Activated B cell treated with CpG ODN at 0.5 μM for 24 hours (primary cell): ENCODE measurements at regions of chr6 and their contacts with region 1.

Region 1: GRCh38 chr6:108113557-108114519 is 39.3 kb upstream of the OSTM1 start:
- DNase-seq: peak; percentile 25
- ATAC-seq: no peak
- H3K4me3 Mint-ChIP-seq: peak overlapping the region; percentile 79
- H3K27ac Mint-ChIP-seq: no peak overlapping the region
- H3K4me1 Mint-ChIP-seq: peaks cover 47% of the 10 kb centered on the region
- H3K27me3 Mint-ChIP-seq: peaks cover 67% of the 10 kb centered on the region
- CTCF ChIP-seq: no peak

Region 2: GRCh38 chr6:108133594-108134179 is 19.8 kb after region 1 on chr6:
- CTCF ChIA-PET with region 1: no interaction called
- POLR2A ChIA-PET with region 1: no interaction called
- intact Hi-C with region 1: loop called (anchors 1 kb)
- DNase-seq: peak; percentile 42
- ATAC-seq: peak; percentile 71
- H3K4me3 Mint-ChIP-seq: peak overlapping the region; percentile 87
- H3K27ac Mint-ChIP-seq: peak overlapping the region; percentile 41
- H3K4me1 Mint-ChIP-seq: peaks cover 16% of the 10 kb centered on the region
- H3K27me3 Mint-ChIP-seq: peaks cover 61% of the 10 kb centered on the region
- CTCF ChIP-seq: no peak

Region 3: DNA sequence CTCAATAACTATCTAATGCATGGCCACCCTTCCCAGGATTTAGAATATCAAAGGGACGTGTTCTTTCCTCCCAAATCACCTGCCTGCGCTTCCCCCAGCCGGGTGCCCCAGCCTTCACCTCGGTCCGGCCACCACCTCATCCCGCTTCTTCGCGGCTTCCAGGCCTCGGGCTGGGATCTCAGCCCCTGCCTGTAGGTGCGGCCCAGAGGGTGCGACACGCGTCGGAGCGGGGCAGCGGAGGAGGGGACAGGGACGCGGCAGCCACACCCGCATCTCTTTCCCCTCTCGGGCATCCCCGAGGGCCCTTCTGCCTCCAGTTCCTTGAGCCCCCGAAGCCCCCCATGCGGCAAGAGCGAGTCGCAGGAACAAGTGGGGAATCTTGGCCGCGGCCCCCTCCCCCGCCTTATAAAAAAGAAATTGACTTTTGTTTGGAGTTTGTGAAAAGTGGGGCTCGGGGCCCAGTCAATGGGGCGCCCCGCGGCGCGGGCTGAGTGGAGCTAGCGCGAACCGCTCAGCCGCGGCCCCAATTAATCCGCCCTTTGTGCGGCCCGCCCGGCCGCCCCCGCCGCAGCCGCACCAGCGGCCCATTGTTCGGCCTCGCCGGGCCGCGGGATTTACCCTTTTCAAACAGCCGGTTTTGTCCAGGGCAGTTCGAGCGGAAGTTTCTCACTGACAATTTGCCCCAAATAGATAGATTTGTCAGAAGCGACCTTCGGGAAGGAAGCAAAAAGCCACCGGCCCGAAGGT is 43.6 kb after region 1 on chr6:
- CTCF ChIA-PET with region 1: interaction called, 7 read pairs
- POLR2A ChIA-PET with region 1: interaction called, 3 read pairs
- intact Hi-C with region 1: loop called (anchors 2 kb)
- DNase-seq: peak; percentile 23
- ATAC-seq: no peak
- H3K4me3 Mint-ChIP-seq: peak overlapping the region; percentile 65
- H3K27ac Mint-ChIP-seq: no peak overlapping the region
- H3K4me1 Mint-ChIP-seq: peaks cover 15% of the 10 kb centered on the region
- H3K27me3 Mint-ChIP-seq: peaks cover 77% of the 10 kb centered on the region
- CTCF ChIP-seq: no peak

Region 4: GRCh38 chr6:108168501-108169463 is 54.9 kb after region 1 on chr6:
- CTCF ChIA-PET with region 1: interaction called, 8 read pairs
- POLR2A ChIA-PET with region 1: interaction called, 4 read pairs
- intact Hi-C with region 1: loop called (anchors 1 kb)
- DNase-seq: peak; percentile 49
- ATAC-seq: peak; percentile 45
- H3K4me3 Mint-ChIP-seq: peak overlapping the region; percentile 57
- H3K27ac Mint-ChIP-seq: no peak overlapping the region
- H3K4me1 Mint-ChIP-seq: peaks cover 53% of the 10 kb centered on the region
- H3K27me3 Mint-ChIP-seq: peaks cover 76% of the 10 kb centered on the region
- CTCF ChIP-seq: no peak

Region 5: DNA sequence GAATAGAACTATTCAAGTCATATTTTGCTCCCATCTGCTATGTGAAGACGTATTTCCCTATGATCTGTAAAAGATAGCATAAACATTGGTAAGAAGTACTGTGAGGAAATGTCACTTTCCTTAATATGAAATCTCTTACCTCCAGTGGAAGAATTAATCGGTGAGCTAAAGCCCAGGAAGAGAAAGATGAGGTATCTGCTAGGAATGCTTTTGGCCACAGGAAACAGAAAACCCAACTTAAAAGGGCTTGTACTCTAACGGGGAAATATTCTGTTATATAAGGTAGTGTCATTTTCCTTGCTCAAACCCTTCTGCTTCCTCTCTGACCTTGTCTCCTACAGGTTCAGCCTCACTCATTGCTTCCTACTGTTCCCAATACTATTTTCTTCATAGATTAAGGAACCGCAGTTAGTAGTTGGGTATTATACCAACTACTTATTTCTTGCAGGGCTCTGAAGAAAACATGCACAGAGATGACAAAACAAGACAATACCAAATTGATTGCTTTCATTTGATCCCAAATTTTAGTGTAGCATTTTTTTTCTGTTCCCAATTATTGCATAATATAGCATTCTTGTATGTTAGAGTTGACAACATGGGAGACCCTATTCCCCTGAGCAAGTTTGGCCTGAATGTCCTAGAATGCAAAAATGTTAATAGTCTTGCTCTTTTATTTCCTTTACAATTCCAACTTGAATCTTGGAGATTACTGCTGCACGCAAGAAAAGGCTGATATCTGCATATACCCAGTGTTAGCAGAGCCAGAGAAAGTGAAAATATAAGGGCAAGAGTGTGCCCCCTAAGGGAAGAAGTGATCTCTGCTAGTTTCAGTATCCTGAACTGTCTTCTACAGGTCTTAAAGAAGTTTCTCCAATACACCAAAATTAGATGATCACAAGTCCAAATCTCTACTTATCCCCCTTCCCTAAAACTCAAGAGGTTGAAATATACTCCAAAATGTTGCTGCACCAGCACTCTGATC is 246.4 kb after region 1 on chr6:
- CTCF ChIA-PET with region 1: interaction called, 3 read pairs
- POLR2A ChIA-PET with region 1: no interaction called
- intact Hi-C with region 1: loop called (anchors 2 kb)
- DNase-seq: no peak
- ATAC-seq: peak; percentile 62
- H3K4me3 Mint-ChIP-seq: no peak overlapping the region
- H3K27ac Mint-ChIP-seq: no peak overlapping the region
- H3K4me1 Mint-ChIP-seq: peaks cover 7% of the 10 kb centered on the region
- H3K27me3 Mint-ChIP-seq: no peaks in the 10 kb centered on the region
- CTCF ChIP-seq: no peak

Region 6: DNA sequence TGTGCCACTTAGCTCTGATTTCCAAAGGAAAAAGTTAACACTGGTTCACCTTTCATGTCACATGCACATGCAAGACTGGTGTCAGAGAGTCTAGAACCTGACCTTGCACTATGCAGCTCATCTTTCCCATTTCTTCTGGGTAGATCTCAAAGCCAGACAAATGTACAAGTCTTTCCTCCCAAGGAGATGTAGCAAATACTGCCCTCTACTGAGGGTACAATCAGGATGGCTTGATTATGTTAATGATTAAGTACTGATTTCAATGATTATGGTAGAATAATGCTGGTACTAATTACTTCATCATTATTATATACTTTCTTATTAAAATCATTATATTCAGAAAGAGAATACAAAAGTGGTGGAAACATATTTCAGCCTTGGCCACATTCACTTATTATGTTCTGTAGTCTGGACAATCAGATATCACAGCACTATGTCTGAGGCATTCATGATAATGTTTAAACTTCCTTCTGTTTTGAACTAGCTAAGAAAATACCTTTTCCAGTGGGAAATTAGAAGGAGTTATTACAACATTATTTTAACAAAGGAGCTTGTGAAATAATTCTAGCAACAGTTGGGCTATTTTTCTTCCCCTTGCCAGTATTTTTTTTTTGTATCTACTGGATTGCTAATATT is 378.4 kb after region 1 on chr6:
- CTCF ChIA-PET with region 1: interaction called, 100 read pairs
- POLR2A ChIA-PET with region 1: no interaction called
- intact Hi-C with region 1: loop called (anchors 1 kb)
- DNase-seq: no peak
- ATAC-seq: peak; percentile 40
- H3K4me3 Mint-ChIP-seq: no peak overlapping the region
- H3K27ac Mint-ChIP-seq: no peak overlapping the region
- H3K4me1 Mint-ChIP-seq: no peaks in the 10 kb centered on the region
- H3K27me3 Mint-ChIP-seq: no peaks in the 10 kb centered on the region
- CTCF ChIP-seq: no peak

Region 7: DNA sequence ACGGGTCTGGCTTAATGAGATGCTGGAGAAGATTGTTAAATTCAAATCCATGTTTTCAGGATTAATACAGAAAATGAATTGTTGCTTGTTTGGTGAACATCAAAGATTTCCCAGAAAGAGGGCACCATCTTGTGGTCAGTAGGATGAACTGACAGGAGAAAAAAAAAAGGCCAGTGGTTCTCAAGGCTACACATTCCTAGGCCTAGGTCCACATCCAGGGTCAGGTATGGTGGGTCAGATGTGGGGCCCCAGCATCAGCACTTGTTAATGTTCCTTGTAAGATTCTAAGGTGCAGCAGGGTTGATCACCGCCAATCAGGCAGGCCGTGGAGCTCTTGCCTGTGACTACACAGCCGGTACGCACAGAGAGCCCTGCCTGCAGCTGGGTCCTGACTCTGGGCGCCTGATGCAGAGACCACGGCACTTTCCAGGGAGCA is 412.9 kb after region 1 on chr6:
- CTCF ChIA-PET with region 1: interaction called, 15 read pairs
- POLR2A ChIA-PET with region 1: no interaction called
- intact Hi-C with region 1: loop called (anchors 1 kb)
- DNase-seq: no peak
- ATAC-seq: peak; percentile 45
- H3K4me3 Mint-ChIP-seq: no peak overlapping the region
- H3K27ac Mint-ChIP-seq: no peak overlapping the region
- H3K4me1 Mint-ChIP-seq: no peaks in the 10 kb centered on the region
- H3K27me3 Mint-ChIP-seq: no peaks in the 10 kb centered on the region
- CTCF ChIP-seq: peak; percentile 79